ENCODE measurements at regions of chr7 and their contacts with region 1.

Region 1: GRCh38 chr7:121395961-121396757 is at the start of gene FAM3C:
- DNase-seq: peak; percentile 44 to 90 (median 65)
- ATAC-seq: peak; percentile 71
- H3K4me3 ChIP-seq: peak within 1 kb of the TSS; percentile 61
- H3K4me3 Mint-ChIP-seq: peak within 1 kb of the TSS; percentile 93
- H3K27ac ChIP-seq: peak within 1 kb of the TSS in 1 of 2 donors; percentile 65
- H3K27ac Mint-ChIP-seq: peak within 1 kb of the TSS; percentile 87
- H3K4me1 ChIP-seq: peaks cover 4% of the 10 kb centered on the region
- H3K4me1 Mint-ChIP-seq: peaks cover 35% of the 10 kb centered on the region
- H3K27me3 ChIP-seq: no peaks in the 10 kb centered on the region
- H3K27me3 Mint-ChIP-seq: no peaks in the 10 kb centered on the region
- CTCF ChIP-seq: peak; percentile 95
- total RNA-seq, gene FAM3C: 7.9 to 10.5 TPM

Region 2: GRCh38 chr7:120987683-120988590 is 408.2 kb before region 1 on chr7:
- CTCF ChIA-PET with region 1: no interaction called
- POLR2A ChIA-PET with region 1: no interaction called
- intact Hi-C with region 1: loop called in 1 of 2 experiments (anchors 10 kb)
- DNase-seq: peak; percentile 77 to 94 (median 83)
- ATAC-seq: peak; percentile 100
- H3K4me3 ChIP-seq: peak overlapping the region; percentile 10
- H3K4me3 Mint-ChIP-seq: peak overlapping the region; percentile 44
- H3K27ac ChIP-seq: no peak overlapping the region
- H3K27ac Mint-ChIP-seq: no peak overlapping the region
- H3K4me1 ChIP-seq: peaks cover 20% of the 10 kb centered on the region
- H3K4me1 Mint-ChIP-seq: peaks cover 26% of the 10 kb centered on the region
- H3K27me3 ChIP-seq: peaks cover 25 to 52% of the 10 kb centered on the region in 2 experiments
- H3K27me3 Mint-ChIP-seq: peaks cover 75% of the 10 kb centered on the region
- CTCF ChIP-seq: peak; percentile 95

Region 3: DNA sequence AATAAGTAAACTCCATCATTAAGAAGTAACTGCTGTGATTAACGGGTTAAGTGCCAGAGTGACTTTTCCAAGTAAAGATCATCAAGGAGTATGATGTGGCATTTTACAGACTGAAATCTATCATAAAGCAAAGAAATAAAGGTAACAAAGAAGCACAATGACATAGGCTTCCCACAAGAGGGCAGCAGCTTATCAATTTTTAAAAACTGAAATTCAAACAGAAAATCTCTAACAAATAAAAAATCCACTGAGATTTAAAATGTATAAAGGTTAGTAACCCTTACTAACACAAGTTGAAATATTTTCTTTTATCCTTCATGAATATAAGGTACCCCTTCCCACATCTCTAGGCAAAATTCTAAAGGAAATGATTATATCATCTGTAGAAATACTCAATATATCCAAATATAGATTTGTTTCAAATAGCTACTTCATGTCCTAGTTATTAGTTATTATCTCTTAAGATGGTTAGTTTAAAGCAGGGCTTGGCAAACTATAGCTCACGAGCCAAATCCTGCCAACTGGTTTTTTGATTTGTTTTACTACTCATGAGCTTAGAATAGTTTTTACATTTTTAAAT is 29.2 kb before region 1 on chr7:
- CTCF ChIA-PET with region 1: interaction called, 12 read pairs
- POLR2A ChIA-PET with region 1: interaction called, 11 read pairs
- intact Hi-C with region 1: loop called (anchors 2 kb)
- DNase-seq: peak in 4 of 14 experiments; percentile 60 to 71 (median 64)
- ATAC-seq: peak; percentile 32
- H3K4me3 ChIP-seq: no peak overlapping the region
- H3K4me3 Mint-ChIP-seq: no peak overlapping the region
- H3K27ac ChIP-seq: no peak overlapping the region
- H3K27ac Mint-ChIP-seq: no peak overlapping the region
- H3K4me1 ChIP-seq: no peaks in the 10 kb centered on the region
- H3K4me1 Mint-ChIP-seq: no peaks in the 10 kb centered on the region
- H3K27me3 ChIP-seq: no peaks in the 10 kb centered on the region
- H3K27me3 Mint-ChIP-seq: no peaks in the 10 kb centered on the region
- CTCF ChIP-seq: peak; percentile 87

Region 4: DNA sequence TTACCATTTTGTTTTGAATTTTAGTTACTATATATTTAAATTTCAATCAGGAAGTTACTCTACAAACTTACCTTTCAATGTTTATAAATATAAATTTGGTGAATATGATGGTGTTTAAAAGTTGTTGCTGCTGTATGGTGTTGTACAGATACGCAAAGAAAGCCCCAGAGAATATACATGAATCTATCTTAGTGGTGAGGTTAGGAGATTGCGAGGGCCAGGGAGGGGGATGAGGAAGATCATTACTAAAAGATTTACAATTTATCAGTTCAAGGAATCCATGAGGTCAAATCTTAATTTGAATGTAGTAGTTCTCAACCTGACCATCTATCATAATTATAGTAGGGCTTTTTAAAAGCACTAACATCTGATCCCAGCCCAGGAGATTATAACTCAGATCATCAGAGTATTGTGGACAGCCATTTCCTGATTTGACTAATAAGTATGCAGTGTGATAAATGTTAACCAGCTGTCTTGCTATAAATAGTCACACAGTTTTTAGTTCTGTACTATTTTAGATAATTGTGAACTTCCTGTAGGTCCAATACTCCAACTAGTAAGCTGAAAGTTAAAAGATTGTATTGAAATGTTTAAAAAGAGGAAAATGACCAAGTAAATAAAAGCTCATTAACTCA is 23.7 kb before region 1 on chr7:
- CTCF ChIA-PET with region 1: interaction called, 12 read pairs
- POLR2A ChIA-PET with region 1: interaction called, 11 read pairs
- intact Hi-C with region 1: loop called (anchors 2 kb)
- DNase-seq: peak in 1 of 14 experiments; percentile 43
- ATAC-seq: no peak
- H3K4me3 ChIP-seq: no peak overlapping the region
- H3K4me3 Mint-ChIP-seq: no peak overlapping the region
- H3K27ac ChIP-seq: no peak overlapping the region
- H3K27ac Mint-ChIP-seq: peak overlapping the region; percentile 25
- H3K4me1 ChIP-seq: no peaks in the 10 kb centered on the region
- H3K4me1 Mint-ChIP-seq: peaks cover 7% of the 10 kb centered on the region
- H3K27me3 ChIP-seq: no peaks in the 10 kb centered on the region
- H3K27me3 Mint-ChIP-seq: no peaks in the 10 kb centered on the region
- CTCF ChIP-seq: no peak

Region 5: GRCh38 chr7:121385800-121386179 is 10.4 kb before region 1 on chr7:
- CTCF ChIA-PET with region 1: interaction called, 23 read pairs
- POLR2A ChIA-PET with region 1: interaction called, 6 read pairs
- intact Hi-C with region 1: no loop called
- DNase-seq: peak in 3 of 14 experiments; percentile 41 to 56 (median 56)
- ATAC-seq: peak; percentile 85
- H3K4me3 ChIP-seq: no peak overlapping the region
- H3K4me3 Mint-ChIP-seq: peak overlapping the region; percentile 1
- H3K27ac ChIP-seq: no peak overlapping the region
- H3K27ac Mint-ChIP-seq: peak overlapping the region; percentile 7
- H3K4me1 ChIP-seq: peaks cover 3% of the 10 kb centered on the region
- H3K4me1 Mint-ChIP-seq: peaks cover 72% of the 10 kb centered on the region
- H3K27me3 ChIP-seq: no peaks in the 10 kb centered on the region
- H3K27me3 Mint-ChIP-seq: no peaks in the 10 kb centered on the region
- CTCF ChIP-seq: no peak

Region 6: GRCh38 chr7:121433780-121434179 is 37.6 kb after region 1 on chr7:
- CTCF ChIA-PET with region 1: interaction called, 3 read pairs
- POLR2A ChIA-PET with region 1: interaction called, 11 read pairs
- intact Hi-C with region 1: loop called in 1 of 2 experiments (anchors 5 kb)
- DNase-seq: no peak
- ATAC-seq: no peak
- H3K4me3 ChIP-seq: no peak overlapping the region
- H3K4me3 Mint-ChIP-seq: no peak overlapping the region
- H3K27ac ChIP-seq: no peak overlapping the region
- H3K27ac Mint-ChIP-seq: no peak overlapping the region
- H3K4me1 ChIP-seq: peaks cover 12% of the 10 kb centered on the region
- H3K4me1 Mint-ChIP-seq: peaks cover 12% of the 10 kb centered on the region
- H3K27me3 ChIP-seq: no peaks in the 10 kb centered on the region
- H3K27me3 Mint-ChIP-seq: no peaks in the 10 kb centered on the region
- CTCF ChIP-seq: no peak

Region 7: GRCh38 chr7:121475806-121476205 is 79.6 kb after region 1 on chr7:
- CTCF ChIA-PET with region 1: no interaction called
- POLR2A ChIA-PET with region 1: no interaction called
- intact Hi-C with region 1: no loop called
- DNase-seq: no peak
- ATAC-seq: no peak
- H3K4me3 ChIP-seq: no peak overlapping the region
- H3K4me3 Mint-ChIP-seq: no peak overlapping the region
- H3K27ac ChIP-seq: no peak overlapping the region
- H3K27ac Mint-ChIP-seq: no peak overlapping the region
- H3K4me1 ChIP-seq: no peaks in the 10 kb centered on the region
- H3K4me1 Mint-ChIP-seq: no peaks in the 10 kb centered on the region
- H3K27me3 ChIP-seq: no peaks in the 10 kb centered on the region
- H3K27me3 Mint-ChIP-seq: no peaks in the 10 kb centered on the region
- CTCF ChIP-seq: no peak

Measured in CD4-positive, alpha-beta T cell (primary cell).